ENCODE measurements at regions of chr3 and their contacts with region 1.

Region 1: DNA sequence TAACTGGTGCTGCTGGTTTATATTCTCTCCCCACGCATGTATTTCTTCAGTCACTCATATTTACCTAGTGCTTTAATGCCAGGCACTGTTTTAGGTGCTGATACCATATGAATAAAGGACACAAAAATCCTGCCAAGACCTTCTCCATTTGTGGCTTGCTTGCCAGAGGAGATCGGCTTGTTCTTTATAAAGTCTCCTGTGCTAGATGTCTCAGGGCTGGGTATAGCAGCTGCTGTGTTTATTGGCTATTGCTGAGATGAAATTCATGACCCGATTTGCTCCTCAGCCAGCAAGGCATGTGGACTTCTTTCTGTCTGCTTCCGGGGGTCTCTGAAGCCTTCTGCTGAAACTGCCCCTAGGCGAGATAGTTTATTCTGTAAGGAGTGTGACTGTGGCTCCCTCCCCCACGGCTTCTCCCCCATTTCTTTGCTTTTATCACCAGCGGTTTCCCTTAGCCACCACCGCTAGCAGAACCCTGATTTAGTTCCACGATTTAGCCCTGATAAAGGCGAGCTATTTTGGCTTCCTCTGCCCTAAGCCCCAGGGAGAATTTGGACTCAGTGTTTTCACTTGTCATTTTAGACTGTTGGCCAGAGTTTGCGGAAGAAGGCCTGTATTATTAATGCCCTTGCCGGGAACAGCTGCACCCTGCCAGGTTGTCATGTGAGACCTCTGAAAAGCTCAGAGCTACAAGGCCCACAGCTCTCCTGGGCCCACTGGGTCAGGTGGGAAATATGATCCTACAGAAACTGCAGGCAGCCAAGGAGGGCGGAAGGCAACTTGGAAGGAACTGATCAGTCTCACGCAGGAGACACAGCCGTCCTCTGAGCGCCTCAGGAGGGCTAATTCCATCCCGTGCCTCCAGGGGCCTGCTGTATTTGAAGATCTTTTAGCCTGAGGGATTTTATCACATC is 46.8 kb downstream of the ST6GAL1 start:
- DNase-seq: peak; percentile 48 to 83 (median 58)
- H3K4me3 ChIP-seq: no peak overlapping the region
- H3K27ac ChIP-seq: peak overlapping the region in 1 of 2 donors; percentile 56
- H3K4me1 ChIP-seq: peaks cover 5% of the 10 kb centered on the region
- H3K27me3 ChIP-seq: no peaks in the 10 kb centered on the region
- CTCF ChIP-seq: no peak
- EP300 ChIP-seq: no peak
- POLR2A ChIP-seq: no peak

Region 2: GRCh38 chr3:186930641-186931531 is 46.2 kb before region 1 on chr3:
- intact Hi-C with region 1: loop called in 1 of 4 experiments (anchors 5 kb)
- DNase-seq: peak; percentile 20 to 52 (median 37)
- H3K4me3 ChIP-seq: peak overlapping the region; percentile 50
- H3K27ac ChIP-seq: peak overlapping the region; percentile 30 to 53
- H3K4me1 ChIP-seq: peaks cover 4% of the 10 kb centered on the region
- H3K27me3 ChIP-seq: no peaks in the 10 kb centered on the region
- CTCF ChIP-seq: no peak
- EP300 ChIP-seq: no peak
- POLR2A ChIP-seq: no peak